ENCODE measurements at regions of chr4 and their contacts with region 1.

Region 1: DNA sequence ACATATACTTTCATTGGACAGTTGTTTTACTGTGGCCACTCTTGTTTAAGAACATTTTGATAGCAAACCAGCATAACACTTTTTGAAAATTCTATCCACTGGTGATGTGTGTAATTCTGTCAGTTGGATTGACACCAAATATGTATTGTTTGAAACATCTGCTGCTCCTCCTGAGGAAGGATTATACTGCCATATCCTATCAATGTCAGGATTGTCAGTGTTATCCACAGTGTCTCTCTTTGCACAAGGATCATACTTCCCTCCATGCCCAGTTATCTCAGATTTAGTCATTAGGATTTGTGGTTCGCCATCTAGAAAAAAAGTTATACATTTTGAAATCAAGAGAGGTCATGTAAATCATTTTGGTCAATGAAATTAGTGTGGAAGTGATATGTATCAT is 1859.6 kb downstream of the C4orf33 start:
- DNase-seq: no peak
- ATAC-seq: no peak
- H3K4me3 ChIP-seq: no peak overlapping the region
- H3K4me3 Mint-ChIP-seq: no peak overlapping the region
- H3K27ac ChIP-seq: no peak overlapping the region
- H3K27ac Mint-ChIP-seq: no peak overlapping the region
- H3K4me1 ChIP-seq: no peaks in the 10 kb centered on the region
- H3K4me1 Mint-ChIP-seq: no peaks in the 10 kb centered on the region
- H3K27me3 ChIP-seq: no peaks in the 10 kb centered on the region
- H3K27me3 Mint-ChIP-seq: no peaks in the 10 kb centered on the region

Region 2: DNA sequence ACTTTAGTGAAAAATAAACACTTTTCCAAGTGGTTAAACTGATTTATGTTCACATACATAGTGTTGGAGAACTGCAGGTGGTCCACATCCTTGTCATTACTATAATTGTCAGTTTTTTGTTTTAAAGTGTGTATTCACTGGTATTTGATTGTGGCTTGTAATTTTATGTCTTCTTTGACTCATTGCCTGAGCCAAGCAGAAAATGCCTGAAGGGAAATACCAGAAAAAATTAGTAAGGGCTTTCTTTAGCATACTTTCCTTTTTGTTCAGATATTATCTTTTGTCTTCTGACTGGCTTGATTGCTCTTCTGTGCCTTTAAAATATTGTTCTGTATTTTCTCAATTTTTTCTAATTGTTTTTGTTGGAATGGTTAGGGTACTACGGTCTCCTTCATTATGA is 878.2 kb before region 1 on chr4:
- CTCF ChIA-PET with region 1: no interaction called
- POLR2A ChIA-PET with region 1: no interaction called
- intact Hi-C with region 1: loop called in 1 of 2 experiments (anchors 5 kb)
- DNase-seq: no peak
- ATAC-seq: no peak
- H3K4me3 ChIP-seq: no peak overlapping the region
- H3K4me3 Mint-ChIP-seq: no peak overlapping the region
- H3K27ac ChIP-seq: no peak overlapping the region
- H3K27ac Mint-ChIP-seq: no peak overlapping the region
- H3K4me1 ChIP-seq: no peaks in the 10 kb centered on the region
- H3K4me1 Mint-ChIP-seq: no peaks in the 10 kb centered on the region
- H3K27me3 ChIP-seq: no peaks in the 10 kb centered on the region
- H3K27me3 Mint-ChIP-seq: no peaks in the 10 kb centered on the region